Panc1 (cell line): ENCODE measurements at regions of chr1 and their contacts with region 1.

Region 1: DNA sequence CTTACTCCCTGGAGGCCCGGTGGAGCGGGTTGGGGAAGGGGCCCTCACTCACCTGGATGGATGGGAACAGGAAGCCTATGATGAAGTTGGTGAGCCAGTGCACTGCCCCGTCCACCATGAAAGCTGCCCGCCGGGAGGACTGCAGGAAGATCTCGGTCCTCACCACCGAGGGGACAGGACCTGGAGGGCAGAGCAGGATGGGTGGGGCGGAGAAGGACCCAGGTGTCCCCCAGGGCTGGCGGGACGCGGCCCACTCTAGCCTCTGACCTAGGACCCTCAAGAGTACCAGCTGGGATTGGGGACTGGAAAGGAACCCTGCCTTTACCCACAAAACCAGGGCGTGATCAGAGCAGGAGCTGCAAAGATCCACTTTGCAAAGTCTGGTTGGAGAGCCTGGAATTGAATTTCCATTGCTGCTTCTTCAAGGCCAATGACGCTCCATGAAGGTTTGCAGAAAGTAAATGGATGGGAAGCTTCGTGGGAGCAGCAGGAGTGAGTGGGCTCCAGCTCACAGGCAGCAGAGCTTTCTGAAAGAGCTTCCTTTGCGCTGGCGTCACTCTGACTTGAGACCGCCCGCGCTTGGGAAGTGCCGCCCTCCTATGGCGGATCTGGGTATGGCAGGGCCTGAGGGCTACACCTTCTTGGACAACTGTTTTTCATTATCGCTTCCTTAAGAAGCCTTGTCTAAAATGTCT is 21.4 kb downstream of the SLC2A7 start:
- DNase-seq: no peak
- ATAC-seq: peak; percentile 93
- H3K4me3 ChIP-seq: no peak overlapping the region
- H3K27ac ChIP-seq: no peak overlapping the region
- H3K4me1 ChIP-seq: no peaks in the 10 kb centered on the region
- H3K27me3 ChIP-seq: no peaks in the 10 kb centered on the region
- CTCF ChIP-seq: peak; percentile 98

Region 2: DNA sequence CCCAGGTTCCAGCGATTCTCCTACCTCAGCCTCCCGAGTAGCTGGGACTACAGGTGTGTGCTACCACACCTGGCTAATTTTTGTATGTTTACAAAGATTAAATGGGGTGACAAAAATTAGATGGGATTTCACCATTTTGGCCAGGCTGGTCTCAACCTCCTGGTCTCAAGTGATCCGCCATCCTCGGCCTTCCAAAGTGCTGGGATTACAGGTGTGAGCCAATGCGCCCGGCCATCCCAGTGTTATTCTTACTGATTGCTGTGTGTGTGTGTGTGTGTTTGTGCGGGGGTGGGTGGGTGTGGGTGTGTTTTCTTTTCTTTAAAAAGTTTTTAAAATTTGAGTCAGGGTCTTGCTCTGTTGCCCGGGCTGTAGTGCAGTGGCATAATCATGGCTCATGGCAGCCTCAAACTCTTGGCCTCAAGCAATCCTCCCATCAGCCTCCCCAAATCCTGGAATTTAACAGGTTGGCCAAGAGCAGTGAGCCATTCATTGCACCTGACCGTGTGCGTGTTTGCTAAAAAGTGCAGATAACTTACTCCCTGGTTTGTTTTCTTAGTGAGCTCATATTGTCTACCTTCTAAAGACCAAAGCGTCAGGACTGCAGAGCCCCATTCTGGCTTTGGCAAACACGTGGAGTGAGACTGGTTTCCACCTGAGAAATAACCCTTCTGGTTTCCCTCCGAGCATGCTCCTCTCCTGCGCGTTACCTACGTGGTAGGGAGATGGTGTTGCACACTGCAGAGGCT is 91.6 kb before region 1 on chr1:
- CTCF ChIA-PET with region 1: interaction called, 21 read pairs
- POLR2A ChIA-PET with region 1: interaction called, 15 read pairs
- in situ Hi-C with region 1: no loop called
- intact Hi-C with region 1: loop called (anchors 1 kb)
- DNase-seq: no peak
- ATAC-seq: no peak
- H3K4me3 ChIP-seq: no peak overlapping the region
- H3K27ac ChIP-seq: peak overlapping the region; percentile 39; the same call in 1 of the 2 replicates
- H3K4me1 ChIP-seq: peaks cover 17% of the 10 kb centered on the region
- H3K27me3 ChIP-seq: no peaks in the 10 kb centered on the region
- CTCF ChIP-seq: no peak

Region 3: GRCh38 chr1:8925406-8925805 is 79.4 kb before region 1 on chr1:
- CTCF ChIA-PET with region 1: interaction called, 15 read pairs
- POLR2A ChIA-PET with region 1: no interaction called
- in situ Hi-C with region 1: no loop called
- intact Hi-C with region 1: no loop called
- DNase-seq: no peak
- ATAC-seq: no peak
- H3K4me3 ChIP-seq: no peak overlapping the region
- H3K27ac ChIP-seq: no peak overlapping the region
- H3K4me1 ChIP-seq: no peaks in the 10 kb centered on the region
- H3K27me3 ChIP-seq: no peaks in the 10 kb centered on the region
- CTCF ChIP-seq: no peak

Region 4: DNA sequence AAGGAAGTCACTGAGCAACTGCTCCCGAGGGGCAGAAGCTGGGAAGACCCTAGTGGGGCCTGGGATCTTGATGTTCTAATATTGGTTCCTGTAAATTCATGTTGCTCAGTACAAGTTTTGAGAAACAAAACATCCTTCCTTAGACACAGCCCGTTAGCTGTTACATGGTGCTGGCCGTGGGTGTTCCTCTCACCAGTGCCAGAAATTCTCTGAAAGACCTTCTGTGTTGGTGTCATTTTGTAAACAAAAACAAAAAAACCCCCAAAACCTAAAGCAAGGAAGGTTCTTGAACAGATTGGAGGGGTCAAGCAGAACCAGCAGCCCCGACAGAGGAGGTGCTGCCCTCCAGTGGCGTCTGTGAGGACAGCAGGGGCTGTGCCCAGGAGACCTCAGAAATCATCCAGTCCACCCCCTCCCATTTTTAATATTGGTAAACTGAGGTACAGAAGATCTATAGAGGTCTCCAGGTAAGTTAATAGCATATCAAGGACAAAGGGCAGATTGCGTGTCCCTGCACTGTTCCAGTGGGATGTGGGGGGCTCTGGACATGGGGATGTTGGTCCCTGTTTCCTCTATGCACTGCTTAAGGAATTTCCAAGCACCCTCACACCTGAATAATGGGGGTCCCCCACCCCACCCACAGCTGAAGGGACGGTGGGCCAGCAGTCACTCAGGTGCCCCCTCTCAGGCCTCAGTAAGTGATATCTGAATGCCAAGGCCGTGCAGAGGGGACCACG is 16.8 kb before region 1 on chr1:
- CTCF ChIA-PET with region 1: interaction called, 30 read pairs
- POLR2A ChIA-PET with region 1: no interaction called
- in situ Hi-C with region 1: no loop called
- intact Hi-C with region 1: no loop called
- DNase-seq: no peak
- ATAC-seq: peak; percentile 64
- H3K4me3 ChIP-seq: no peak overlapping the region
- H3K27ac ChIP-seq: peak overlapping the region; percentile 82
- H3K4me1 ChIP-seq: peaks cover 40% of the 10 kb centered on the region
- H3K27me3 ChIP-seq: no peaks in the 10 kb centered on the region
- CTCF ChIP-seq: peak; percentile 97

Region 5: GRCh38 chr1:9101510-9102146 is 96.8 kb after region 1 on chr1:
- CTCF ChIA-PET with region 1: interaction called, 7 read pairs
- POLR2A ChIA-PET with region 1: no interaction called
- in situ Hi-C with region 1: no loop called
- intact Hi-C with region 1: loop called (anchors 1 kb)
- DNase-seq: no peak
- ATAC-seq: peak; percentile 90
- H3K4me3 ChIP-seq: no peak overlapping the region
- H3K27ac ChIP-seq: no peak overlapping the region
- H3K4me1 ChIP-seq: no peaks in the 10 kb centered on the region
- H3K27me3 ChIP-seq: no peaks in the 10 kb centered on the region
- CTCF ChIP-seq: peak; percentile 85